Sigmoid colon (tissue), 7 donors: ENCODE measurements at regions of chr7 and their contacts with region 1.

Region 1: GRCh38 chr7:131225619-131226513 is 101.8 kb upstream of the MKLN1 start:
- DNase-seq: peak; percentile 84
- H3K4me3 ChIP-seq: no peak overlapping the region
- H3K27ac ChIP-seq: peak overlapping the region; percentile 70 to 73 (median 72)
- H3K4me1 ChIP-seq: peaks cover 0 to 17% (median 15%) of the 10 kb centered on the region in 4 donors
- H3K27me3 ChIP-seq: no peaks in the 10 kb centered on the region
- CTCF ChIP-seq: no peak
- EP300 ChIP-seq: peak in 3 of 4 donors; percentile 50 to 78 (median 55)
- POLR2A ChIP-seq: no peak

Region 2: DNA sequence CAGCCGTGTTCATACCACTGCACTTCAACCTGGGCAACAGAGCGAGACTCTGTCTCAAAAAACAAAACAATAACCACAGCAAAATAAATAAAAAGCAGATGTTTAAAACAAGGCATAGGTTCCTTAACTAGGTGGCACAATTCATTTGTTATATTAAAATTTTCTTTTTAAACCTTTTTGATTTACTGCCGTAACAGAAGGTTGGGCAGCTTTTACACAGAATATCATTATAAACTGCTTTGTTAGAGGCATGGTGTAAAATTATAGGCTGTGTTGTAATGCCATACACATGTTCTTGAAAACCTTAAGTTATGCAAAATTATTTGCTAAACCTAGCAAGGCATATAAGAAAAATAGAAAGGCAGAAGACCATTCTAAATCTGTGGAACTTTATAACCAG is 186.2 kb after region 1 on chr7:
- intact Hi-C with region 1: loop called (anchors 10 kb)
- DNase-seq: no peak
- H3K4me3 ChIP-seq: no peak overlapping the region
- H3K27ac ChIP-seq: no peak overlapping the region
- H3K4me1 ChIP-seq: no peaks in the 10 kb centered on the region
- H3K27me3 ChIP-seq: no peaks in the 10 kb centered on the region
- CTCF ChIP-seq: no peak
- EP300 ChIP-seq: no peak
- POLR2A ChIP-seq: no peak